ENCODE measurements at regions of chr3 and their contacts with region 1.

Region 1: DNA sequence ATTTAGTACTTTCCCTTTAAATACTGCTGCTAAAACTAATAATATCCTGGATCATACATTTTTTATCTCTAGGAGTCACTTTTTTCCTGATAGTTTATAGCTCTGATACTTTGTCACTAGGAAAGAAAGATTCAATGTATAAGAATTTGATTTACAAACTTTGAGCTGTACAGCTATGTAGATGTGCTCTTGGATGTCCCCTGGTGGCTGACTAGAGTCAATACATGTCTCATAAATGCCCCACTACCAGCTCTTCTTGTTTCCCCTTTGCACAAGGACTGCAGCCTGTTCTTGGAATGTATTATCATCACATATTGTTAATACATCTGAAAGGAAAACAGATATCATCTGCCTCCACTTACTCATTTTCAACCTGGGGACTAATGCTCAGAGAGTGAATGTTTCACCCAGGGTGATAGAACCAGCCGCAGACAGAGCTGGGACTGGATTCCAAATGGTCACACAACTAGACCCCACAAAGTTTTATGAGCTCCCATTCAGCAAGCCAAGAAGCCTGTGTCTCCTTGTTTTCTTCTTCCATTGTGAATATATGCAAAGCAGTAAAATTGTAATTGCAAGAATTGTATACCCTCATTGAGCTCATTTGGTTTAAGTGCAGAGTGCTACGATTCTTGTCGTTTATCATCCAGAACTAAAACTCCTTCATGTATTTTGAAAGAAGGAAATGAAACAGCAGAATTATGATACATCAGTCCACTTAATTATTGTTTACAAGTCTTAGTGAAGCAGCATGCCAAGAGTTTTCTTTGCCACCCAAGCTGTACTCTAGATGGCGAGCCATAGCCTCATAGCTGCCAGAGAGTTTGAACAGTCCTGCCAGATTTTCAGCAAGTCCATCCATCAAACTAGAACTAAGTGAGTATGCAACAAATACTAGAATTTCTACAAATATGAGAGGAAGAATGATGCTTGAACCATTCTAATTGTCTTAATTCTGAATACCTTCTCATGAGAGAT is 261.6 kb upstream of the LMCD1 start:
- DNase-seq: peak; percentile 62
- H3K4me3 ChIP-seq: no peak overlapping the region
- H3K27ac ChIP-seq: no peak overlapping the region
- H3K4me1 ChIP-seq: no peaks in the 10 kb centered on the region
- H3K27me3 ChIP-seq: no peaks in the 10 kb centered on the region
- CTCF ChIP-seq: peak; percentile 62 to 80
- POLR2A ChIP-seq: no peak

Region 2: GRCh38 chr3:6935970-6936369 is 1304.0 kb before region 1 on chr3:
- CTCF ChIA-PET with region 1: interaction called, 4 read pairs
- POLR2A ChIA-PET with region 1: no interaction called
- dilution Hi-C with region 1: no loop called
- intact Hi-C with region 1: loop called (anchors 1 kb)
- DNase-seq: no peak
- H3K4me3 ChIP-seq: no peak overlapping the region
- H3K27ac ChIP-seq: no peak overlapping the region
- H3K4me1 ChIP-seq: no peaks in the 10 kb centered on the region
- H3K27me3 ChIP-seq: no peaks in the 10 kb centered on the region
- CTCF ChIP-seq: no peak
- POLR2A ChIP-seq: no peak

Region 3: GRCh38 chr3:7568526-7569184 is 671.4 kb before region 1 on chr3:
- CTCF ChIA-PET with region 1: no interaction called
- POLR2A ChIA-PET with region 1: no interaction called
- dilution Hi-C with region 1: no loop called
- intact Hi-C with region 1: no loop called
- DNase-seq: no peak
- H3K4me3 ChIP-seq: no peak overlapping the region
- H3K27ac ChIP-seq: no peak overlapping the region
- H3K4me1 ChIP-seq: no peaks in the 10 kb centered on the region
- H3K27me3 ChIP-seq: no peaks in the 10 kb centered on the region
- CTCF ChIP-seq: no peak
- POLR2A ChIP-seq: no peak

Region 4: GRCh38 chr3:7800006-7800780 is 439.8 kb before region 1 on chr3:
- CTCF ChIA-PET with region 1: interaction called, 24 read pairs
- POLR2A ChIA-PET with region 1: no interaction called
- dilution Hi-C with region 1: no loop called
- intact Hi-C with region 1: no loop called
- DNase-seq: peak; percentile 34
- H3K4me3 ChIP-seq: no peak overlapping the region
- H3K27ac ChIP-seq: no peak overlapping the region
- H3K4me1 ChIP-seq: no peaks in the 10 kb centered on the region
- H3K27me3 ChIP-seq: no peaks in the 10 kb centered on the region
- CTCF ChIP-seq: peak; percentile 6
- POLR2A ChIP-seq: no peak

Region 5: DNA sequence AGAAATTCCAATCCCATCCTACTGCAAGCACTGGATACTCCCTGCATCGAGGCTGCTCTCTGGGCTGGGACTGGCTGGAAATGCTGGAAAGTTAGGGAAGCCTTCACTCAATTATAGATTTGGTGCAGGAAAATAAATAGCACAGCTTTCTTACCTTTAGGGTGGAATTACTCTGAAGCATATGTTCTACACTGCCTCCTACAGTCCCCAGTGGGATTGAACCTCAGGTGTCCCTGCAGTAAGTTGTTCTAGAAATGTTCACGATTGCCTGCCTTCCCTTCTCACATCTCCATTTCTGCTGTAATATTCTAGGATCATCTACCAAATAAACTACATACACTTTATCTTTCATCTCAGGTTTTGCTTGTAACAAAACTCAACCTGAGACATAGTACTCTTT is 275.1 kb before region 1 on chr3:
- CTCF ChIA-PET with region 1: no interaction called
- POLR2A ChIA-PET with region 1: no interaction called
- dilution Hi-C with region 1: no loop called
- intact Hi-C with region 1: no loop called
- DNase-seq: no peak
- H3K4me3 ChIP-seq: no peak overlapping the region
- H3K27ac ChIP-seq: no peak overlapping the region
- H3K4me1 ChIP-seq: no peaks in the 10 kb centered on the region
- H3K27me3 ChIP-seq: no peaks in the 10 kb centered on the region
- CTCF ChIP-seq: no peak
- POLR2A ChIP-seq: no peak

Region 6: DNA sequence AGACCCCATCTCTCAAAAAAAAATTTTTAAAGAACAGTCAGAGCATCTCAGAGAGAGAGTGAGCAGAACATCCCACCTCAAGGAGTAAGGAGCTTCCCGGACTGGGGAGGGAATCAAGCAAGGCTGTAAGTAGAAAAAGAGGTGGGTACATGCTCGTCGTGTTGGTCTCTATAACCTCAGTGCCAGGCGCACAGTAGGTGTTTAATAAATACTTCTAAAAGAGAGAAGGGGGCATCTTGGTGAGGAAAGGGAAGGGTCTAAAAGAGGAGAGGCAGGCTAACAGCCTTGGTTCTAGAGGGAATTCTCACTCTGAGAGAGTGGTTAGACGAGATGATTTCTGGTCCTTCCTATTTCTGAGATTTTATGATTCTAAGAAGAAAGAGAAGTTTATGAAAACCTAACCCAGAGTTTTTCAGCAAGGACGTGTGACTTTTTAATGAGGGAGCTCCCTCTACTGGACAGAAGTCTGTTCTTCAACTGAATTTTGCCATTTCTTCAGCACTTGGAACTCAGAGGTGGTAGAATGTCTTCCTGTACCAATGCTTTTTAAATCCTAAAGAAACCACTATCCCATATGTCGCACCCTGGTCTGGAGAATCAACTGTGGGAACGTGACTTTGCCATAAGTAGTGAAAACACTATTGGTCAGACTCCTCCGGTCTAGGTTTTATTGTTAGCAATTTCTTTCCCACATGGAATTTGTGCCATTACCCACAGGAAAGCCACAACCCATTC is 61.9 kb after region 1 on chr3:
- CTCF ChIA-PET with region 1: interaction called, 15 read pairs
- POLR2A ChIA-PET with region 1: no interaction called
- dilution Hi-C with region 1: no loop called
- intact Hi-C with region 1: no loop called
- DNase-seq: peak; percentile 34
- H3K4me3 ChIP-seq: no peak overlapping the region
- H3K27ac ChIP-seq: no peak overlapping the region
- H3K4me1 ChIP-seq: no peaks in the 10 kb centered on the region
- H3K27me3 ChIP-seq: no peaks in the 10 kb centered on the region
- CTCF ChIP-seq: peak; percentile 49 to 54
- POLR2A ChIP-seq: no peak

Region 7: DNA sequence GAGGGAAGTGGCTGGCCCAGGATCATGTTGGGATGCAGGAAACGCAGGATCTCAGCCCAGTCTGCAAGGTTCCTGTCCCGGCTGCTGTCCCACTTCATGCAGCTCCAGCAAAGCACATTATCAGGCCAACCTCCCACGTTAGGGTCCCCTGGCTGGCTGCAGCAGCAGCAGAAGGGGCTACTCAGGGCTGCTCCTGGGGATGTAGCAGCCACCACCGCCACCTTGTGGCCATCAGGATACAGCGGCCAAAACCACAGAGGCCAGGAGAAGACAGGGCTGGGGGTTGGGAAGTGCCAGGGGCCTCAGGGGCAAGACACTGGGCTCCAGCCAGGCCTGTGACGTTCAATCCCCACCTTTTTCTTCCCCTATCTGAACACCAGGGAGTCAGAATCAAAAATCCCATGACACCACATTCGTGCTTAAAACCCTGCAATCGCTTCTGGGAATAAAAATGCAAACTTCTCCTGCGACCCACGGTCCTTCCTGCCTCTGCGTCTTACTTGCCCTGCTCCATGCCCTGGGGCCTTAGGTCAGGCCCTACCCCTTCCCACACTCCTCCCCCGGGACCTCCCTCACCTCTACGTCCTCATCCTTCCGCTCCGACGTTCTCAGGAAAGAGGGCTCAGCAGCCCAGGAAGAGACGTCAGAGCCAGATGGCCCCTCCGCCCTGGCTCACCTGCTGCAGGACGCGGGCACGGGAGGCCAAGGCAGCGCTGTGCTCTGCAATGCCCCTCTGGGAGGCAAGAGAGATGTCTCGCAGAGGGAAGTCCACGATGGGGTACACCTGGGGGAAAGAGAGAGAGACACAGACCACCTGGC is 383.1 kb after region 1 on chr3:
- CTCF ChIA-PET with region 1: no interaction called
- POLR2A ChIA-PET with region 1: no interaction called
- dilution Hi-C with region 1: no loop called
- intact Hi-C with region 1: loop called (anchors 5 kb)
- DNase-seq: peak; percentile 63
- H3K4me3 ChIP-seq: no peak overlapping the region
- H3K27ac ChIP-seq: no peak overlapping the region
- H3K4me1 ChIP-seq: peaks cover 4% of the 10 kb centered on the region
- H3K27me3 ChIP-seq: no peaks in the 10 kb centered on the region
- CTCF ChIP-seq: peak; percentile 75 to 96
- POLR2A ChIP-seq: no peak

Measured in endothelial cell of umbilical vein (primary cell).